Activated CD8-positive, alpha-beta T cell treated with anti-CD3 and anti-CD28 coated beads for 36 hours (primary cell): ENCODE measurements at regions of chr11 and their contacts with region 1.

Region 1: DNA sequence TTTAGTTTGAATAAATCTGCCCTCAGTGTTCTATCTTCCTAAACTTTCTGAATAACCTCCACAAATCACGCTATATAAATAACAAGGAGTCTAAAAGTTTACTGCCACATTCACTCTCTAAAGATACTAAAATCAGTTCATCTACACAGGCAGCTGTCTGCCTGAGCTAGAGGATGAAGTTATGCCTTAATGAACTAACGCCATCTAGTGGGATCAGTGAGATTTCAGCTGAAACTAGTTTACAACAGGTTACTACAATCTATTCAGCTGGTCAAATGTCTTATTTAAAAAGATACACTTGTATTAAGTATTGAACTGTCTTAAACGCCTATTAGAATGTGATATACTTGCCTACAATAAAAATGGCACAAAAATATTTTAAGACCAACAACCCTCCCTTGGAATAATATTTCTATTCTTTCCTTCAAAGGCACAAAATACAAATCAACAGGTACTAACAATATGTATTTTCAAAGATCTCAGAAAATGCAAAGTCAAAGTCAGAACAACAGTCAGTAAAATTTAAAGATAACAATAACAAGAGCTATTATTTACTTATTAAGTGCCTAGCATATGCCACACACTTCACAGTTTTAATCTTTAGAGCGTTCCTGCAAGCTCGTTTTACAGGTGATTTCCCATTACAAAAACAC is 84.1 kb downstream of the LARGE2 start:
- DNase-seq: peak; percentile 13
- ATAC-seq: peak; percentile 62
- H3K4me3 Mint-ChIP-seq: no peak overlapping the region
- H3K27ac Mint-ChIP-seq: no peak overlapping the region
- H3K4me1 Mint-ChIP-seq: peaks cover 2% of the 10 kb centered on the region
- H3K27me3 Mint-ChIP-seq: no peaks in the 10 kb centered on the region
- CTCF ChIP-seq: peak; percentile 86

Region 2: DNA sequence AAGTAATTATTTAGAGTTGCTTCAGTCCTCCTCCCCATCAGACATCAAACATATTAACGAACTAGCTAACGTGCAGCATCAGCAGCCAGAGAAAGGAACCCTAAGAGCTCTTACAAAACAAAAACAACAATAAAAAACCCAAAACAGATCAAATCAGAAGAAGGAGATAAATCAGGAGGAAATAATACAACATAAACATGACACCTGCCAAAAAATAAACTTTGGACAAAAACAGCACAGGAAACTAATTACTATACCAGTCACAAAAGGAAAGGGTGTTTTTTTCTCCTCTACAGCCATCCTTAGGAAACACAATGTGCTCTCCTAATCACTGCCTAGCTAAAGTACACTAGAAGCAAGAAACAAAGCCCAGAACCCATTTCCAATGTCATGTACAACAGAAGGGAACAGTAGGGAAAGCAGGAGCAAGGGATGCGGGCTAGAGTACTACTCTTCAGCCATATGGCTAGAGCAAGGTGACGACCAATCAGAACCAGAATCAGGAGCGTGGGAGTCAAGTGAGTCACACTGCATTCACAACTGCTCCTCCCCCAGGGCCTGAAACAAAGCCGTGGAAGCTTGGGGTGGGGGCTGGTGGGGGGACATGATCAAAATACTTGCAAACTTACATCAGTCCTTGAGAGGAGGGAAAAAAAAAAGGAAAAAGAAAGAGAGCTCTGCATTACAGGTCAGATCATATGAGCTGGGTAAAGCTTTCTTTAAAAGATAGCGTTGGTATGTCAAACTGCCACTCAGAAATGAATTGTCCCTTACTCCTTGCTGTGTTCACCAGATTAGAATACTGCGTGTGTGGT is 23.7 kb before region 1 on chr11:
- CTCF ChIA-PET with region 1: interaction called, 28 read pairs
- POLR2A ChIA-PET with region 1: interaction called, 3 read pairs
- intact Hi-C with region 1: no loop called
- DNase-seq: peak; percentile 66
- ATAC-seq: peak; percentile 89
- H3K4me3 Mint-ChIP-seq: peak overlapping the region; percentile 20
- H3K27ac Mint-ChIP-seq: peak overlapping the region; percentile 40
- H3K4me1 Mint-ChIP-seq: peaks cover 27% of the 10 kb centered on the region
- H3K27me3 Mint-ChIP-seq: no peaks in the 10 kb centered on the region
- CTCF ChIP-seq: no peak

Region 3: GRCh38 chr11:45993531-45994001 is 13.0 kb before region 1 on chr11:
- CTCF ChIA-PET with region 1: interaction called, 30 read pairs
- POLR2A ChIA-PET with region 1: no interaction called
- intact Hi-C with region 1: no loop called
- DNase-seq: no peak
- ATAC-seq: no peak
- H3K4me3 Mint-ChIP-seq: no peak overlapping the region
- H3K27ac Mint-ChIP-seq: no peak overlapping the region
- H3K4me1 Mint-ChIP-seq: no peaks in the 10 kb centered on the region
- H3K27me3 Mint-ChIP-seq: no peaks in the 10 kb centered on the region
- CTCF ChIP-seq: no peak

Region 4: GRCh38 chr11:46017341-46017740 is 10.8 kb after region 1 on chr11:
- CTCF ChIA-PET with region 1: interaction called, 15 read pairs
- POLR2A ChIA-PET with region 1: no interaction called
- intact Hi-C with region 1: no loop called
- DNase-seq: no peak
- ATAC-seq: no peak
- H3K4me3 Mint-ChIP-seq: no peak overlapping the region
- H3K27ac Mint-ChIP-seq: no peak overlapping the region
- H3K4me1 Mint-ChIP-seq: peaks cover 4% of the 10 kb centered on the region
- H3K27me3 Mint-ChIP-seq: no peaks in the 10 kb centered on the region
- CTCF ChIP-seq: no peak

Region 5: GRCh38 chr11:46597609-46598219 is 591.2 kb after region 1 on chr11:
- CTCF ChIA-PET with region 1: no interaction called
- POLR2A ChIA-PET with region 1: no interaction called
- intact Hi-C with region 1: no loop called
- DNase-seq: no peak
- ATAC-seq: no peak
- H3K4me3 Mint-ChIP-seq: no peak overlapping the region
- H3K27ac Mint-ChIP-seq: peak overlapping the region; percentile 26
- H3K4me1 Mint-ChIP-seq: peaks cover 13% of the 10 kb centered on the region
- H3K27me3 Mint-ChIP-seq: no peaks in the 10 kb centered on the region
- CTCF ChIP-seq: no peak